Esophagus muscularis mucosa (tissue), 4 donors: ENCODE measurements at regions of chr7 and their contacts with region 1.

Region 1: DNA sequence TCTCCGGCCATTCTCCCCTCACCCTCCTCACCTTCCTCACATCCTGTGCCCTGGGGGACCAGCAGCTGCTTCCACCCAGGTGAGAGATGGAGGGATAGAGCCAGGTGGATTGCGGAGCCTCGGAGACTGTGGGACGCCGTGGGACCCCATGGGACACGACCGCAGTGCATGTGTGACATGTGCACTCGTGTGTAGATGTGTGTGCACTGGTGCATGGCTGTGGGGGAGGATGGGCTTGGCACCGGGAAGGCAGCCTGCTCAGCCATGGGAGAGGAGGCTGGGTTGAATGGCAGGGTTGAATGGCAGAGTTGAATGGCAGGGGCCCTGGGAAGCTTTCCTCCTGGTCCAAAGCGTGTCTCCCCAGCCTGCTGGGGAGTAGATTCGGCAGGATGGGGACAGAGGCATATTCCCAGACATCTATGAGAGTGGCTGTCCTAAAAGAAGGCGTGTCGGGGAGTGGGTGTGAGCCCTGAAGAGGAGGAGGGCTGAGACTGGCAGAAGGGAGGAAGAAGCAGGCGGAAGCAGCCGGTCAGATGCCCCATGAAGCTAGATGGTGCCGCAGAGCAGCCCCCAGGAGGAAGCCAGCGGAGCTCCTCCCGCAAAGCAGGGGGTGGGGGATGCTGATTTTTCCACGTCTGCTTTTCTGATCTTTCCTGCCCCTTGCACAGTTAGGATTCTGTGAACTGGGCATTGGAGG is 815 bp downstream of the GIMAP8 start:
- DNase-seq: peak; percentile 93
- H3K4me3 ChIP-seq: peak overlapping the region; percentile 47 to 56 (median 49)
- H3K27ac ChIP-seq: peak overlapping the region; percentile 49 to 74 (median 70)
- H3K4me1 ChIP-seq: peaks cover 12 to 17% (median 13%) of the 10 kb centered on the region in 4 donors
- H3K27me3 ChIP-seq: peaks cover 0 to 22% (median 0%) of the 10 kb centered on the region in 4 donors
- CTCF ChIP-seq: no peak
- EP300 ChIP-seq: no peak
- POLR2A ChIP-seq: no peak

Region 2: DNA sequence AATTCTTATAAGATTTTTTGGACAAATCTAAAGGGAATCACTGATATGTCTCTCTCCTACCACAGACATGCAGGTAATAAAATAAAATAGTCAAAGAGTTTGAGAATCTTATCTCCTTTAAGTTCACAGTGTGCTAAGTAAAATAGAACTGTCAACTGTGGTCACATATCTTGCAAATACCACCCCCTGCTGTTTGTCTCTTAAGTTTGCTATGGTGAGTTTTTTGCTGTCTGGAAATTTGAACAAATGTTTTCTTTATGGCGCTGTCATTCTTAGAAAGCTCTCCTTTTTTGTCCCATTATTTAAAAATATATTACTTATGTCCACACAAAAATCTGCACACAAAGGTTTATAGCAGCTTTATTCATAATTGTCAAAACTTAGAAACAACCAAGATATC is 305.6 kb after region 1 on chr7:
- intact Hi-C with region 1: loop called (anchors 2 kb)
- DNase-seq: no peak
- H3K4me3 ChIP-seq: no peak overlapping the region
- H3K27ac ChIP-seq: no peak overlapping the region
- H3K4me1 ChIP-seq: peaks cover 4 to 27% (median 21%) of the 10 kb centered on the region in 4 donors
- H3K27me3 ChIP-seq: no peaks in the 10 kb centered on the region
- CTCF ChIP-seq: peak; percentile 31 to 43 (median 34)
- EP300 ChIP-seq: no peak
- POLR2A ChIP-seq: no peak